Mucosa of descending colon (tissue), 3 donors: ENCODE measurements at regions of chr6 and their contacts with region 1.

Region 1: GRCh38 chr6:17771609-17772008 is 64.9 kb upstream of the NUP153 start:
- DNase-seq: no peak
- ATAC-seq: no peak
- H3K4me3 ChIP-seq: no peak overlapping the region
- H3K4me1 ChIP-seq: no peaks in the 10 kb centered on the region
- CTCF ChIP-seq: no peak

Region 2: GRCh38 chr6:17666646-17667045 is 105.0 kb before region 1 on chr6:
- intact Hi-C with region 1: loop called in 1 of 2 experiments (anchors 5 kb)
- DNase-seq: no peak
- ATAC-seq: no peak
- H3K4me3 ChIP-seq: no peak overlapping the region
- H3K4me1 ChIP-seq: no peaks in the 10 kb centered on the region
- CTCF ChIP-seq: no peak